Calu3 (cell line): ENCODE measurements at regions of chr1 and their contacts with region 1.

Region 1: GRCh38 chr1:234610348-234611152 is 572 bp upstream of the IRF2BP2 start:
- DNase-seq: peak; percentile 96
- H3K4me3 Mint-ChIP-seq: peak overlapping the region; percentile 89
- H3K27ac Mint-ChIP-seq: peak overlapping the region; percentile 97
- H3K4me1 Mint-ChIP-seq: peaks cover 53% of the 10 kb centered on the region
- H3K27me3 Mint-ChIP-seq: no peaks in the 10 kb centered on the region
- CTCF ChIP-seq: no peak

Region 2: DNA sequence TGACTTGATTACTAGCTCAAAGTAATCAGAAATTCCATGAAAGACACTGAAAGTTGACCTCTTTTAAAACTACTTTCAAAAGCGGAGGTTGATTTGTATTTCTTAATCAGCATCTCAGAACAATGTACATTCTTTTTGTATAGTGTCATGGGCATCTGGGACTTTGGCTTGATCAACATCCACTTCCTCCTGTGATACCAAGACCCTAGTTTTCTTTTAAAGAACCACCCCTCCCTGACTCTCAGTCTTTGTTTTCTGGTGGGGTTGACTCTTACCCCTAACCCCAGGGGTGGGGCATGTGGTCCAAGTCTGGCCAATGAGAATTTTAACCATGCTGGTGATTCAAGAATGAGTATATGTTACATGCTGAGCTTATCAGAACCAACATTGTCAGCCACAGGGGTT is 21.2 kb after region 1 on chr1:
- CTCF ChIA-PET with region 1: interaction called, 24 read pairs
- intact Hi-C with region 1: loop called (anchors 2 kb)
- DNase-seq: peak; percentile 88
- H3K4me3 Mint-ChIP-seq: no peak overlapping the region
- H3K27ac Mint-ChIP-seq: peak overlapping the region; percentile 96
- H3K4me1 Mint-ChIP-seq: peaks cover 44% of the 10 kb centered on the region
- H3K27me3 Mint-ChIP-seq: no peaks in the 10 kb centered on the region
- CTCF ChIP-seq: no peak

Region 3: GRCh38 chr1:234772345-234773147 is 162.0 kb after region 1 on chr1:
- CTCF ChIA-PET with region 1: interaction called, 3 read pairs
- intact Hi-C with region 1: loop called (anchors 5 kb)
- DNase-seq: peak; percentile 93
- H3K4me3 Mint-ChIP-seq: peak overlapping the region; percentile 34
- H3K27ac Mint-ChIP-seq: peak overlapping the region; percentile 93
- H3K4me1 Mint-ChIP-seq: peaks cover 32% of the 10 kb centered on the region
- H3K27me3 Mint-ChIP-seq: no peaks in the 10 kb centered on the region
- CTCF ChIP-seq: no peak

Region 4: DNA sequence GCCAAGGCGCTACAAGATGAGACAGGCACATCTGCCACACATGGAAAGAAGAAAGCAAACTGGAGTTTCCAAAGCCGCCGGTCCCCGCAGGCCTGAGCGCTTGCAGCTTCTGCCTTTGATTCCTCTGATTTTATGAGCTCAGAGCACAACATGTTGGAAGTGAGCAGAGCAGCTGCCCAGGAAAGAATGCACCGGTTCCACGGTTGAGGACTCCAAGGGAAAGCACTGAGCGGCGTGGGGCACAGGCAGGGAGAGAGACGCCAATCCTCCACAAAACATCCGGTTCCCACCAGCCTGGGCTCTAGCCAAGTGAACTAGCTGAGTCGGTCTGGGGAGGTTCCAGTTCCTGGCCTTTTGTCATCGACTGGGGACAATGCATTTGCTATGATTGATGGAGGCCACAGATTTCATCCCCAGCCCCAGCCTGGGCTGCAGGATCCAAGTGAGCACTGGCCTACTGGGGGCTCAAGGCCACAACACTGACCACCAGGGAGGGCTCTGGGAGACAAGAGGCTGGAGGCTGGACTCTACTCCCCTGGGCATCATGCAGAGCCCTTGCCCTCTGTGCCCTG is 252.5 kb after region 1 on chr1:
- CTCF ChIA-PET with region 1: no interaction called
- intact Hi-C with region 1: loop called (anchors 5 kb)
- DNase-seq: no peak
- H3K4me3 Mint-ChIP-seq: no peak overlapping the region
- H3K27ac Mint-ChIP-seq: no peak overlapping the region
- H3K4me1 Mint-ChIP-seq: peaks cover 56% of the 10 kb centered on the region
- H3K27me3 Mint-ChIP-seq: no peaks in the 10 kb centered on the region
- CTCF ChIP-seq: no peak